ENCODE measurements at regions of chr7 and their contacts with region 1.

Region 1: GRCh38 chr7:54921116-54921515 is 97.7 kb upstream of the EGFR start:
- DNase-seq: no peak
- H3K4me3 ChIP-seq: no peak overlapping the region
- H3K27ac ChIP-seq: no peak overlapping the region
- H3K4me1 ChIP-seq: peaks cover 10% of the 10 kb centered on the region
- H3K27me3 ChIP-seq: no peaks in the 10 kb centered on the region
- CTCF ChIP-seq: no peak

Region 2: DNA sequence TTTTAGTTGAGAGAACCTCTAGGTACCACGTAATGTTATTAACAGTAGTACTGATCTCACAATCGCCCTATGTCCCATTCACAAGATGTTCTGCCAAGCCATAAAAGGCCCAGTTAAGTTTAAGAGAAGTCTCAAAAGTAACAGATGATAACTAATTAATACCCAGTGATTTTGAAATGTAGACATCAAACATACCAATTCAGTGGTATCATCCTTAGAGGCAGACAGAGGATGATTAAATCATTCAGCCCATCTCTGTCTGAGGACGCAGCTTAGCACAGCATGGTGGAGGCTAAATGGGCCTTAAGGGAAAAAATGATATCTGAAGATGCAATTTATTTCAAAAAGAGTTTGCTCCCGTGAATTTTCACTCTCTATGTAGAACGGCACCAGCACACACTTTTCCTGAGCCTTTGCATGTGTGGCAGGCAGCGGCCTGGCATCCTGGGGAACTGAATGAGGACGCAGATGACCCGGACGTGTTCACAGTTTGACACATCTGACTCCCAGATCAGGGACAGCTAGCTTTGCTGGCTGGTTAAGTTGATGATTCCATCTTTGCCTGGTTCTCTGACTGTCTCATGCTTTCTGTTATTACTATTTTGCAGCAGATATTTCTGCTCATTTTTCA is 111.1 kb after region 1 on chr7:
- CTCF ChIA-PET with region 1: no interaction called
- POLR2A ChIA-PET with region 1: interaction called, 45 read pairs
- intact Hi-C with region 1: no loop called
- DNase-seq: no peak
- H3K4me3 ChIP-seq: no peak overlapping the region
- H3K27ac ChIP-seq: peak overlapping the region; percentile 31
- H3K4me1 ChIP-seq: peaks cover 59% of the 10 kb centered on the region
- H3K27me3 ChIP-seq: no peaks in the 10 kb centered on the region
- CTCF ChIP-seq: no peak

Measured in PC-9 (cell line).